ENCODE measurements at regions of chr17 and their contacts with region 1.

Region 1: DNA sequence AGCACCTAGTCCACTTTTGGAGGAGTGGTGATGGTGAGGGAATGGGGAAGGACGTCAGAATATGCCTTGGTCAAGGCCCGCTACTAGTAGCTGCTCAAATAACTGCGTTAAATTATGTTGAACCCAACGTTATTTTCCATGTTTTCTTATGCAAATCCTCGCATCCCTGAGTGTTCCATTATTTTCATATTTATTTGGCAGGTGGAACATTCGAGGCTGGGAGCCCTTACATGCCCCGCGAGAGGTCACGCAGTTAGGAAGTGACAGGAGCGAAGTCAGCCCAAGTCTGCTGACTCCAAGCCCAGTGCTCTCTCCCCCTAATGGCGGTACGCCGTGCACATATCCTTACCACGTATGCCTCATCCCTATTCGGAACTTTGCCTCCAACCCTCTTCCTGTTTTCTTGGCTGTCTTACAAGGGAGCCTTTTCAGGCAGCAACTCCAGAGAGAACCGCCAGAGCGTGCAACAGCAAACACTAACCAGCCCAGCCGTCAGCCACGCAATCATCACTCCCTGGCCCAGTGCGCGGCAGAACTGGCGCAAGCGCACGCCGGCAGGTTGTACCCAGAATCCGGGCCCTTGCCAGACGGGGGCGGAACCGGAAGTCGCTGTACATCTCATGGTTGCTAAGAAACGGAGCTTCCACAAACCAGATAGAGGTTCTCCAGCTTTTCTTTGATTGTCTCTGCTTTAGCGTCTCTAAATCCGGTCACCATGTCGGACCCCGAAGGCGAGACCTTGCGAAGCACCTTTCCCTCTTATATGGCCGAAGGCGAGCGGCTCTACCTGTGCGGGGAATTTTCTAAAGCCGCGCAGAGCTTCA is at the start of gene ODAD4:
- DNase-seq: peak; percentile 98
- ATAC-seq: peak; percentile 99
- H3K4me3 Mint-ChIP-seq: peak within 1 kb of the TSS; percentile 96
- H3K27ac Mint-ChIP-seq: peak within 1 kb of the TSS; percentile 96
- H3K4me1 Mint-ChIP-seq: peaks cover 55% of the 10 kb centered on the region
- H3K27me3 Mint-ChIP-seq: no peaks in the 10 kb centered on the region
- total RNA-seq, gene ODAD4: 0.89 to 0.97 TPM

Region 2: DNA sequence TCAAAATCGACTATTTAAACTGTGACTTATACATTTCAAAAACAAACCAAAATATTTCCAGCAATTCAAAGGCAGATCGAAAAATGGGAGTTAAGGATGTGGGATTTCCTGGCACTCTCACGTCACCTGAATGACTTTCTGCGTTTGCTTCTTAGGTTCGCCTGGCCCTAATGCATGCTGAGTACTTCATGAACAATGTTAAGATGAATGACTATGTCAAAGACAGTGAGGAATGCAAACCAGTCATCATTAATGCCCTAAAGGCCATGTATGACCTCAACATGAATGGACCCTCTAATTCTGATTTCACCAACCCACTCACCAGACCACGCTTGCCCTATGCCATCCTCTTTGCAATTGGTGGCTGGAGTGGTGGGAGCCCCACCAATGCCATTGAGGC is 85.2 kb before region 1 on chr17:
- CTCF ChIA-PET with region 1: no interaction called
- POLR2A ChIA-PET with region 1: no interaction called
- DNase-seq: no peak
- ATAC-seq: no peak
- H3K4me3 Mint-ChIP-seq: no peak overlapping the region
- H3K27ac Mint-ChIP-seq: no peak overlapping the region
- H3K4me1 Mint-ChIP-seq: no peaks in the 10 kb centered on the region
- H3K27me3 Mint-ChIP-seq: no peaks in the 10 kb centered on the region

Region 3: DNA sequence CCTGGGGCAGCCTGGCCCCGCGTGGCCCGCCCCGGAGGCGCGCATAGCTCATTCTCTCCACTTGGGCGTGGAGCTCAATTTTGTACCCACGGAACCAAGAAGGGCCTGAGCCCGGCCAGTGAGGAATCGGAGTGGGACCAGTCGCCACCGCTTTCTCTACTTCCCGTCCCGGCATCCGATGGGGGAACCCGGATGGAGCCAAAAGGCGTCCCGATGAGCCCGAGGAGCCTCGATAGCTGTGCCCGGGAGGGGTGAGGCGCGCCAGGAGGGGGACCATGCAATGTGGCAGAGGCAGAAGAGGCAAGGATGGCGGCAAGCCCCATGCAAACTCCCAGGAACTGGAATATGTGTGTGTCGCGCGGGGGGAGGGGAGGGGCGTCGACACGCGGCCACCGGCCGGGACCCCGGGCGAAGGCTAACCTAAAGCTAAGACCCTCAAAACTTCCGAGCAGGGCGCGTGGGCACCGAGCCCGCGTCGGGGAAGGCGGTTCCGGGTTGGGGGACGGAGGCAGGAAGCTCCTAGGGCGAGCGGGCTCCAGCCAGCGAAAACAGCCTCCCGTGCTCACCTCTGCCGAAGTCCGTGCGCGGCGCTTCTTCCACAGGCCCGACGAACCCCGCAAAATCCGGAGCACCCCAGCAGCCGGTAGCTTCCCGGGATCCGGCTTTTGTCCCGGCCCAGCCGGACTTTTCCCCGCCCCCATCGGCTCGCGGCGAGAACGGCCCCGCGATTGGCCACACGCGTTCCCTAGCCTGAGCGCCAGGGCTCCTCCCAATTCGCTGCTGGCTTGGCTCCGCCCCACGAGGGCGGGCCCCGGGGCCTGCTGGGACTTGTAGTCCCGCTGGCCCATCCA is 11.7 kb before region 1 on chr17 and contains the start of gene ACLY:
- CTCF ChIA-PET with region 1: interaction called, 13 read pairs
- POLR2A ChIA-PET with region 1: interaction called, 49 read pairs
- DNase-seq: peak; percentile 98
- ATAC-seq: peak; percentile 94
- H3K4me3 Mint-ChIP-seq: peak within 1 kb of the TSS; percentile 93
- H3K27ac Mint-ChIP-seq: peak within 1 kb of the TSS; percentile 95
- H3K4me1 Mint-ChIP-seq: peaks cover 41% of the 10 kb centered on the region
- H3K27me3 Mint-ChIP-seq: no peaks in the 10 kb centered on the region
- total RNA-seq, gene ACLY: 177 to 185 TPM

Region 4: GRCh38 chr17:41982026-41982760 is 52.0 kb after region 1 on chr17:
- CTCF ChIA-PET with region 1: no interaction called
- POLR2A ChIA-PET with region 1: no interaction called
- DNase-seq: no peak
- ATAC-seq: no peak
- H3K4me3 Mint-ChIP-seq: no peak overlapping the region
- H3K27ac Mint-ChIP-seq: no peak overlapping the region
- H3K4me1 Mint-ChIP-seq: no peaks in the 10 kb centered on the region
- H3K27me3 Mint-ChIP-seq: no peaks in the 10 kb centered on the region

Region 5: GRCh38 chr17:42078396-42079043 is 148.3 kb after region 1 on chr17:
- CTCF ChIA-PET with region 1: no interaction called
- POLR2A ChIA-PET with region 1: no interaction called
- DNase-seq: no peak
- ATAC-seq: no peak
- H3K4me3 Mint-ChIP-seq: no peak overlapping the region
- H3K27ac Mint-ChIP-seq: no peak overlapping the region
- H3K4me1 Mint-ChIP-seq: peaks cover 5% of the 10 kb centered on the region
- H3K27me3 Mint-ChIP-seq: no peaks in the 10 kb centered on the region